Activated CD4-positive, alpha-beta memory T cell treated with anti-CD3 and anti-CD28 coated beads for 36 hours (primary cell): ENCODE measurements at regions of chr11 and their contacts with region 1.

Region 1: DNA sequence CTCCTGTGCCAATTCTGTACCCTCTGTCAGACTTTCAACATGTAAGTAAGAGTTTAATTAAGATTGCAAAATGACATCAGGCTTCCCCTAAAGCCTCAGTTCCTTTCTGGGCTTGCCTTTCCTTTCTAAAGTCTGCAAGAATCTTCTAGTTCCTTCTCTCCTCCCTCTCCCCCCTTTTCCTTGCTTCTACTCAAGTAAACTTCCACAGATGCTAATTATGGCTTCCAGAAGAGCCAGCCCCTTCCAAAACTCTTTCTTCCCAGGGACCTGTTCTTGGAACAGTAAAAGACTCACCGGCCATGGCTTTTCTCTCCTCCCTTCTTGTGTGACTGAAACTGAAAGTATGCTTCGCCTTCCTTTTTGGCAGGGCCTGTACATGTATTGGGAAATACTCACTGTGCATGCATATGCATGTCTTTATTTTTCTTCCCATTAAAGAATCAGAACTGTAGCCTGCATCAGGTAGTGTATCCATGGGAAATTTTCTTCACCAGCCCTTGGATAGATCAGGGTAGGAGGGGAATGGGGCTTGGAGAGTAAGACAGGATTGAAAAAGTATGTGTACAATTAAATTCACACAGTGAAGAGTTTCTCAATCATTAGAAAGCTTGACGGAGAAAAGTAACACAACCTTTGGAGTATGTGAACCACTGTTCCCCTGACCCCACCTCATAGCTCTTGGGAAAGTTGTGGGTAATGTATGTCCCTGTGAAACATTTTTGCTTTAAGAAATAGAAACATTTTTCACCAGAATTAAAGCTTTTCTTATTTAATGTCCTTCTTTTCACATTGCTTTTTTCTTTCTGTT is at the start of gene CASP1:
- DNase-seq: peak; percentile 45
- H3K4me3 Mint-ChIP-seq: peak within 1 kb of the TSS; percentile 88
- H3K27ac Mint-ChIP-seq: peak within 1 kb of the TSS; percentile 94
- H3K4me1 Mint-ChIP-seq: peaks cover 42% of the 10 kb centered on the region
- H3K27me3 Mint-ChIP-seq: no peaks in the 10 kb centered on the region
- total RNA-seq, gene CASP1: 28.5 to 37.1 TPM

Region 2: DNA sequence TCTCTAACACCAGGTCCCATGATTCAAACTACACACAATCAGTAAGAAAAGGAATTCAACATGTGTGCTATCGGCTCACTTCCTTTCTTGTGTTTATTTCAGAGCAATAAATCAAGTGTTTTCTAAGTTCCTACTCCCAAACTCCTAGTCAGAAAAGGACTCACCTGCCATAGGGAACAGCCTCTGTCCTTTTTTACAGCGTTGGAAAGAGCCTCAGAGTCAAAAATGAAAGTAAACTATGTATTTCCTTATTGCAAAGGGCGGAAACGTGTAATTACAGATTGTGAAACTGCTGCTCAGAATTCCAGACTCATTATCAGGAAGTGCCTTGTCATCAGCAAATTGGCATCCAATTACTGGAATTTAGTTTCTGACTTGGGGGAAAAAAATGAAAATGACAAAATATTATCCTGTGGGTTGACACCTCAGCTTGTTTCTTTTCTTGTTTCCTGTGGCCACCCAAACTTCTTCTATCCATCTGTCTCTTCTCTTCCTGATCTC is 66.6 kb before region 1 on chr11 and contains the start of gene CASP4:
- CTCF ChIA-PET with region 1: no interaction called
- POLR2A ChIA-PET with region 1: no interaction called
- intact Hi-C with region 1: loop called (anchors 2 kb)
- DNase-seq: no peak
- H3K4me3 Mint-ChIP-seq: peak within 1 kb of the TSS; percentile 89
- H3K27ac Mint-ChIP-seq: peak within 1 kb of the TSS; percentile 92
- H3K4me1 Mint-ChIP-seq: peaks cover 36% of the 10 kb centered on the region
- H3K27me3 Mint-ChIP-seq: no peaks in the 10 kb centered on the region
- total RNA-seq, gene CASP4: 58.2 to 58.3 TPM

Region 3: DNA sequence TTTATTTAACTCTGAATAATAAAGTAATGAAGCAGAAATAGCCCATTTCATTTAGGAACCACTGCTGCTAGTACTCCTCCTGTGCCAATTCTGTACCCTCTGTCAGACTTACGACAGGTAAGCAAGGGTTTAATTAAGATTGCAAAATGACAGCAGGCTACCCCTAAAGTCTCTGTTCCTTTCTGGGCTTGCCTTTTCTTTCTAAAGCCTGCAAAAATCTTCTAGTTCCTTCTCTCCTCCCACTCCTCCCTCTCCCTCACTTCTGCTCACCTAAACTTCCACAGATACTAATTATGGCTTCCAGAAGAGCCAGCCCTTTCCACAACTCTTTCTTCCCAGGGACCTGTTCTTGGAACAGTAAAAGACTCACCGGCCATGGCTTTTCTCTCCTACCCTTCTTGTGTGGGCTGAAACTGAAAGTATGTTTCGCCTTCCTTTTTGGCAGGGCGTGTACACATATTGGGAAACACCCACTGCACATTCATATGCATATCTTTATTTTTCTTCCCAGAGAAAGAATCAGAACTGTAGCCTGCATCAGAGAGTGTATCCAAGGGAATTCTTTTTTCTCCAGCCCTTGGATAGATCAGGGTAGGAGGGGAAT is 10.0 kb after region 1 on chr11 and contains the start of gene CARD16:
- CTCF ChIA-PET with region 1: no interaction called
- POLR2A ChIA-PET with region 1: no interaction called
- intact Hi-C with region 1: loop called (anchors 1 kb)
- DNase-seq: peak; percentile 55
- H3K4me3 Mint-ChIP-seq: peak within 1 kb of the TSS; percentile 77
- H3K27ac Mint-ChIP-seq: peak within 1 kb of the TSS; percentile 71
- H3K4me1 Mint-ChIP-seq: peaks cover 55% of the 10 kb centered on the region
- H3K27me3 Mint-ChIP-seq: no peaks in the 10 kb centered on the region
- total RNA-seq, gene CARD16: 8.6 to 10.5 TPM

Region 4: GRCh38 chr11:105297463-105297862 is 262.4 kb after region 1 on chr11:
- CTCF ChIA-PET with region 1: no interaction called
- POLR2A ChIA-PET with region 1: no interaction called
- intact Hi-C with region 1: loop called (anchors 10 kb)
- DNase-seq: no peak
- H3K4me3 Mint-ChIP-seq: no peak overlapping the region
- H3K27ac Mint-ChIP-seq: peak overlapping the region; percentile 58
- H3K4me1 Mint-ChIP-seq: peaks cover 24% of the 10 kb centered on the region
- H3K27me3 Mint-ChIP-seq: peaks cover 3% of the 10 kb centered on the region